ENCODE measurements at regions of chr7 and their contacts with region 1.

Region 1: DNA sequence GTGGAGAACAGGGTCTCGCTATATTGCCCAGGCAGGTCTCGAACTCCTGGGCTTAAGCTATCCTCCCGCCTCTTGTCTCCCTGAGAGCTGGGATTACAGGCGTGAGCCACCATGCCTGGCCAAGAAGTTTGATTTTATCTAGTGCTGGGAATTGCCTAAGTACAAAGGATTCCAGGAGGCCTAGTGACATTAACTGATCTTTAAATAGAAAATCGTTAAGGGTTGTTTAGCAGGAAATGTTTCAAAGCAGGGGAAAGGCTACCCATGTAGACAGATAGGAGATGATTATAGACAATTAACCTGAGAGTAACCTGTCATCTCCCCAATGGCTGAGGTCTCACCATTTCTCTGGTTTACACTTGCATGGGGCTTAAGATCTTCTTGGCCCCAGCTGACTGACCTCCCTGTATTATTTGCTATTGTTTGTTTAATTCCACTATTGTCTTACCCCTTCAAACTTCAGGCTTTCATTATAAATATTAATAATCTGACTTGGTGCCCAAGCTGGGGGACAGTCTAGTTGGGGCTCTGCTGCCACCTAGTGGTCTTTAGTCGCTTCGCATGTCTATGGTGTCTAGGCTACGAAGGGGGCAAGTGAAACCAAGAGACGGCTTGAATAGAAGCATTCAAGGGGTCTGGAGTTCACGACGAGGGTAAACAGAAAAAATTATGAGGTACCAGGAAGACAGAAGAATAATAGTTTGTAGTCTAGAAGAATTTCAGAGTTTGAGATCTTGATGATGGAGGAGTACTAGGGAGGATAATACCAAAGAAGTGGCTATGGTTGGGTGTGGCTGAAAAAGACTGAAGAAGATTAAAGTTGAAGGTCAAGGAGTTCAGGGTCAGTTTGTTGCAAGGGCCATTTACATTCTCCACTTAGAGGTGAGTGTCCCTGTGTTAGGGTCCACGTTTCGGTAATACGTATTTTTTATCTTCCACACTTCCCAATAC is 40.4 kb upstream of the BPGM start:
- DNase-seq: peak; percentile 62 to 81
- ATAC-seq: peak; percentile 89 to 94
- H3K4me3 ChIP-seq: no peak overlapping the region
- H3K27ac ChIP-seq: peak overlapping the region; percentile 64 to 82
- H3K4me1 ChIP-seq: peaks cover 47% of the 10 kb centered on the region
- CTCF ChIP-seq: peak; percentile 99
- EP300 ChIP-seq: no peak; a peak in 1 of 5 replicates
- POLR2A ChIP-seq: no peak
- RAD21 ChIP-seq: peak; percentile 100

Region 2: GRCh38 chr7:134458806-134459698 is 147.2 kb before region 1 on chr7 and contains the start of gene AKR1B1:
- CTCF ChIA-PET with region 1: interaction called, 19 read pairs
- POLR2A ChIA-PET with region 1: no interaction called
- DNase-seq: peak; percentile 98 to 99
- ATAC-seq: peak; percentile 93 to 94
- H3K4me3 ChIP-seq: peak within 1 kb of the TSS; percentile 86
- H3K27ac ChIP-seq: peak within 1 kb of the TSS; percentile 93 to 94
- H3K4me1 ChIP-seq: peaks cover 72% of the 10 kb centered on the region
- CTCF ChIP-seq: peak; percentile 56
- EP300 ChIP-seq: no peak
- POLR2A ChIP-seq: peak; percentile 99
- RAD21 ChIP-seq: peak; percentile 10 to 56; a peak in 3 of 5 replicates
- polyA plus RNA-seq, gene AKR1B1: 1,636 and 1,761 TPM in 2 replicates

Region 3: GRCh38 chr7:134533288-134533771 is 72.9 kb before region 1 on chr7:
- CTCF ChIA-PET with region 1: interaction called, 27 read pairs
- POLR2A ChIA-PET with region 1: no interaction called
- DNase-seq: no peak
- ATAC-seq: peak in 1 of 2 experiments; percentile 6; a peak in 3 of 6 replicates
- H3K4me3 ChIP-seq: peak overlapping the region; percentile 84
- H3K27ac ChIP-seq: peak overlapping the region; percentile 91 to 98
- H3K4me1 ChIP-seq: peaks cover 72% of the 10 kb centered on the region
- CTCF ChIP-seq: no peak
- EP300 ChIP-seq: peak; percentile 27 to 74; a peak in 3 of 5 replicates
- POLR2A ChIP-seq: no peak
- RAD21 ChIP-seq: 0 out of 5 replicates have a peak, but pooled peaks of 1 of the 2 experiments have one; percentile 10

Region 4: GRCh38 chr7:134553976-134554375 is 52.3 kb before region 1 on chr7:
- CTCF ChIA-PET with region 1: interaction called, 92 read pairs
- POLR2A ChIA-PET with region 1: no interaction called
- DNase-seq: peak in 1 of 2 experiments; percentile 62
- ATAC-seq: peak in 1 of 2 experiments; percentile 9; a peak in 2 of 6 replicates
- H3K4me3 ChIP-seq: no peak overlapping the region
- H3K27ac ChIP-seq: peak overlapping the region in 1 of 2 experiments; percentile 86; a peak in 4 of 6 replicates
- H3K4me1 ChIP-seq: peaks cover 13% of the 10 kb centered on the region
- CTCF ChIP-seq: peak; percentile 17; the same call in 1 of the 3 replicates
- EP300 ChIP-seq: no peak
- POLR2A ChIP-seq: no peak
- RAD21 ChIP-seq: peak; percentile 27 to 54; a peak in 2 of 5 replicates

Region 5: GRCh38 chr7:134593530-134594392 is 12.5 kb before region 1 on chr7:
- CTCF ChIA-PET with region 1: interaction called, 29 read pairs
- POLR2A ChIA-PET with region 1: no interaction called
- DNase-seq: peak; percentile 63 to 98
- ATAC-seq: peak; percentile 94 to 96
- H3K4me3 ChIP-seq: no peak overlapping the region
- H3K27ac ChIP-seq: peak overlapping the region; percentile 87 to 90
- H3K4me1 ChIP-seq: peaks cover 37% of the 10 kb centered on the region
- CTCF ChIP-seq: no peak
- EP300 ChIP-seq: peak; percentile 63 to 86; a peak in 3 of 5 replicates
- POLR2A ChIP-seq: no peak
- RAD21 ChIP-seq: peak; percentile 27 to 55; a peak in 4 of 5 replicates

Region 6: DNA sequence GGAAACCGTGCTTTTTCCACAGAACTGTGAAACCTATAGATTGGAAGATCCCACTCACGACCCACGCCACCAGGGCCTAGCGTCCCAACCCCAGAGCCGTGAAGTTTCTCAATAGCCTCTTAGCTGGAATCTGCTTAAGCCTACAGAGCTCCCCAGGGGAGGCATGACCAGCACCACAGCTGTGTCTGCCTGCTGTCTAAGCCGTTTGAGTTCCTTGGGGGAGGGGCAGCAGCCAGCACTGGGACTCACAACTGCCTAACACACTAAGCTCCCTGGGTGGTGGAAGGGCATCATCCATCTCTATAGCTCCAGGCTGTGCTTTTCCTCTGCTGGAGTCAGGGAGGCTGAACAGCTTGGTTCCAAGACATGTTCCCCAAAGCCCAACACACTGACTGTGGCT is 515.6 kb after region 1 on chr7:
- CTCF ChIA-PET with region 1: no interaction called
- POLR2A ChIA-PET with region 1: no interaction called
- DNase-seq: no peak
- ATAC-seq: no peak
- H3K4me3 ChIP-seq: no peak overlapping the region
- H3K27ac ChIP-seq: no peak overlapping the region
- H3K4me1 ChIP-seq: no peaks in the 10 kb centered on the region
- CTCF ChIP-seq: no peak
- EP300 ChIP-seq: no peak
- POLR2A ChIP-seq: no peak
- RAD21 ChIP-seq: no peak

Measured in A549 (cell line).